Heart right ventricle (tissue), 16 donors: ENCODE measurements at regions of chr5 and their contacts with region 1.

Region 1: GRCh38 chr5:12934722-12935121 is 1009.8 kb downstream of the DNAH5 start:
- DNase-seq: no peak
- ATAC-seq: no peak
- H3K4me3 ChIP-seq: no peak overlapping the region
- H3K27ac ChIP-seq: no peak overlapping the region
- H3K4me1 ChIP-seq: no peaks in the 10 kb centered on the region
- H3K27me3 ChIP-seq: no peaks in the 10 kb centered on the region
- CTCF ChIP-seq: no peak

Region 2: DNA sequence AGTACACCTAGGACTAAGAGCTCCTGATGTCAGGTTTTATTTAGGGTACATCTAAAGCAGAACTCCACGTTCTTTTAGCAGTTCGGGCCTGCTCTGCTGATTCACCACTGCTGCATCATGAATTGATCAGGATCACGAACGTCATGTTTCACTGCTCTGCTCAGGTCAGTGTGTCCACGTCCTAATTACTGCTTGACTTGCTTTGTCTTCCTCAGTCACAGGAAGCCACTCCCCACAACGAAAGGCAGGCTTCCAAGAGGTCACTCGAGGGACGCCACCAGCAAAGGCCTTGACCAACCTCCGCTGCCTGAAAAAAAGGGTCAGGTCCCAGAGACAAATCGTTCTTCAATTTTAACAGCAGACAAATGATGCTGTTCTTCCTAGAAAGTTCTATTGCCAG is 1070.8 kb before region 1 on chr5:
- intact Hi-C with region 1: loop called in 1 of 10 experiments (anchors 5 kb)
- DNase-seq: no peak
- ATAC-seq: no peak
- H3K4me3 ChIP-seq: no peak overlapping the region
- H3K27ac ChIP-seq: no peak overlapping the region
- H3K4me1 ChIP-seq: no peaks in the 10 kb centered on the region
- H3K27me3 ChIP-seq: no peaks in the 10 kb centered on the region
- CTCF ChIP-seq: no peak

Region 3: GRCh38 chr5:12672141-12672540 is 262.6 kb before region 1 on chr5:
- intact Hi-C with region 1: no loop called
- DNase-seq: no peak
- ATAC-seq: no peak
- H3K4me3 ChIP-seq: no peak overlapping the region
- H3K27ac ChIP-seq: no peak overlapping the region
- H3K4me1 ChIP-seq: no peaks in the 10 kb centered on the region
- H3K27me3 ChIP-seq: no peaks in the 10 kb centered on the region
- CTCF ChIP-seq: no peak

Region 4: GRCh38 chr5:12985142-12985541 is 50.4 kb after region 1 on chr5:
- intact Hi-C with region 1: no loop called
- DNase-seq: no peak
- ATAC-seq: no peak
- H3K4me3 ChIP-seq: no peak overlapping the region
- H3K27ac ChIP-seq: no peak overlapping the region
- H3K4me1 ChIP-seq: no peaks in the 10 kb centered on the region
- H3K27me3 ChIP-seq: no peaks in the 10 kb centered on the region
- CTCF ChIP-seq: no peak